ENCODE measurements at regions of chr15 and their contacts with region 1.

Region 1: DNA sequence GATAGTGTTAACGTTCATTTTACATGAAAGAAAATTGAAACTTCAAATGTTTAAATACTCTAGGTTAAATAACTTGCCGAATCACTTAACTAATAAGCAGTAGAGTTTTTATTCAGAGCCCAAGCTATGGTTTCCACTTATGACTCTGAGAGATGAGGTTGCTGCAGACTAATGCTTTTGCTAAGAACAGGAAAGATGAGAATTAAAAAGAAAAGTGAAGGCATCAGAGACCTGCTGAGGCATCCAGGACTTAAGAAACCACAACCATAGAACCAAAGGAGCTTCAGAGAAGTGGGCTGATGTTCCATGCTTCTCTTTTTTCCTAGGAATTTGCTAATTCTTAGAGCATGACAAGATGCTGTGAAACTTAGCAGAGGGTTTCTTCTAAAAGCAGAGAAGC is 9.5 kb downstream of the HMG20A start:
- DNase-seq: no peak
- ATAC-seq: no peak
- H3K4me3 ChIP-seq: no peak overlapping the region
- H3K27ac ChIP-seq: no peak overlapping the region
- H3K4me1 ChIP-seq: peaks cover 0 to 26% (median 7%) of the 10 kb centered on the region in 12 donors
- H3K27me3 ChIP-seq: no peaks in the 10 kb centered on the region
- CTCF ChIP-seq: no peak
- POLR2A ChIP-seq: no peak

Region 2: DNA sequence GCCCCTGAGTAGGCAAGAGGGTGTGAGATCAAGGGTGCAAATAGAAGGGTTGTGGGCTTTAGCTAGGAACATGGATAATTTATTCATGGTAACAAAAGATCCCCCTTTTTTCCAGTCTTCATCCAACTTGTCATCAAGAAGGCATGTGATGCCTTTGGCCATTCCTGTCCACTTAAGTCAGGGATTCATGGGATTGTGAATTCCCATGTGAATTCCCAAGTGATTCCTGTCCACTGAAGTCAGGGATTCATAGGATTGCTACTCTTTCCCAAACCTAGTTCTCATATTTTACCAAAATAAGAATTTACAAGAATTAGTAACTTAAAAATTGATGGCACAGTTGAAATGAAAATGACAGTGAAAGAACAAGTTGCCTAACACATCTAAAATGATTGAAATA is 31.3 kb after region 1 on chr15:
- intact Hi-C with region 1: loop called in 1 of 10 experiments (anchors 5 kb)
- DNase-seq: no peak
- ATAC-seq: no peak
- H3K4me3 ChIP-seq: no peak overlapping the region
- H3K27ac ChIP-seq: peak overlapping the region in 5 of 12 donors; percentile 3 to 50 (median 31)
- H3K4me1 ChIP-seq: peaks cover 0 to 49% (median 36%) of the 10 kb centered on the region in 12 donors
- H3K27me3 ChIP-seq: no peaks in the 10 kb centered on the region
- CTCF ChIP-seq: no peak
- POLR2A ChIP-seq: no peak

Region 3: GRCh38 chr15:77475898-77476297 is 45.7 kb after region 1 on chr15:
- intact Hi-C with region 1: loop called in 1 of 10 experiments (anchors 5 kb)
- DNase-seq: no peak
- ATAC-seq: no peak
- H3K4me3 ChIP-seq: no peak overlapping the region
- H3K27ac ChIP-seq: peak overlapping the region in 3 of 12 donors; percentile 30 to 75 (median 63)
- H3K4me1 ChIP-seq: peaks cover 0 to 48% (median 7%) of the 10 kb centered on the region in 12 donors
- H3K27me3 ChIP-seq: no peaks in the 10 kb centered on the region
- CTCF ChIP-seq: no peak
- POLR2A ChIP-seq: no peak

Measured in heart left ventricle (tissue), 16 donors.